ENCODE measurements at regions of chr7 and their contacts with region 1.

Region 1: DNA sequence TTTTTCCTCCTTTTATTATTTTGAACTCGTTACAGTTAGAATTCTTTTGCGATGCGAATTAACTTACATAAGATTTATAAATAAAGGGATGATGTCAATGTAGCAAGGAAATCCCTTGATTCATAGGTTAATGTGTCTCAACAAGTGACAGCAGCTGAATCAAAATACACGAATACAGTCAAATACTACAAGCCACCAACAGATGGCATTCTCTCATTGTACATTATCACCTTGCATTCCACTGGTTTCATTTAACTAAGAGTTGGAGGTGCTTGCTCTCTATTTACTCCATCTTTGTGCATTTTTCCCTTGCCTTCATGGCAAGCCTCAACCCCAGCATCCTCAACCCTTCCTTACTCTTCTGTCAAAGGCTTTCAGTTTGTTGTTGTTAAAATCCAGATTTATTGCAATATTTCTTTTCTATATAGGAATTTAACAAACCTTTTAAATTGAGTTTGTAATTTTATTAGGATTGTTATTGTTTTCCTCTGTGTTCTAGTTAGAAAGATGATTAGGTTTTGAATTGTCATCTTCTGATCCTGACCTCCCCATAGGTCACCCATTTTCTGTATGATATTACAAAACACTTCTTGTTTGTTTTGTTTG is 78.3 kb downstream of the SLC25A40 start:
- DNase-seq: no peak
- H3K4me3 Mint-ChIP-seq: no peak overlapping the region
- H3K27ac Mint-ChIP-seq: no peak overlapping the region
- H3K4me1 Mint-ChIP-seq: no peaks in the 10 kb centered on the region
- H3K27me3 Mint-ChIP-seq: peaks cover 9% of the 10 kb centered on the region

Region 2: DNA sequence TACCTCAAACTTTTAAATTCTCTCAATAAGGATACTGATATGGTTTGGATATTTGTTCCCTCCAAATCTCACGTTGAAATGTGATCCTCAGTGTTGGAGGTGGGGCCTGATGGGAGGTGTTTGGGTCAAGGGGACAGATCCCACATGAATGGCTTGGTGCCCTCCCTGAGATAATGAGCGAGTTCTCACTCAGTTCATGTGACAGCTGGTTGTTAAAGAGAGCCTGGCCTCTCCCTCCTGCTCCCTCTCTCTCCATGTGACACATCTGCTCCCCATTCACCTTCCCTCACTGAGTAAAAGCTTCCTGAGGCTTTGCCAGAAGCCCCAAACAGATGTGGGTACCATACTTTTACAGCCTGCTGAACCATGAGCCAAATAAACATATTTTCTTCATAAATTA is 341.7 kb before region 1 on chr7:
- CTCF ChIA-PET with region 1: no interaction called
- DNase-seq: no peak
- H3K4me3 Mint-ChIP-seq: no peak overlapping the region
- H3K27ac Mint-ChIP-seq: no peak overlapping the region
- H3K4me1 Mint-ChIP-seq: no peaks in the 10 kb centered on the region
- H3K27me3 Mint-ChIP-seq: peaks cover 5% of the 10 kb centered on the region

Region 3: DNA sequence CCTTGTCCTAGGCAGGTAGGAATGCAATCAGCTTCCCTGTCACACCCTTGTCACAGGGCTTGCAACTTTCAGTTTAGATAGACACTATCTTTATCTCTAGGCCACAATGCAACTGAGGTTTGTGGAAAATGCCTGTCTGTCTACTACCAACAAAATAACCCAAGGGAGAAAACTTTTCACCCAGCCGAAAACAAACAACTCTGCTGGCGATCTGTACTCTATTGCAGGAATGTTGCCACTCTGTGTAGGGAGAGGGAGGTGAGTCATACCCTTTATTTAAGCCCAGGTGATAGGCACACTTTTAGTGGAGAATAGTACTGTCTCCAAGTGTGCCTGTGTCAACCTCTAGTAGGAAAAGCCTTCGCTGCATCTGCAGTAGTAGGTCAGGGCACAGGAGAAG is 30.1 kb before region 1 on chr7:
- CTCF ChIA-PET with region 1: no interaction called
- DNase-seq: no peak
- H3K4me3 Mint-ChIP-seq: no peak overlapping the region
- H3K27ac Mint-ChIP-seq: no peak overlapping the region
- H3K4me1 Mint-ChIP-seq: no peaks in the 10 kb centered on the region
- H3K27me3 Mint-ChIP-seq: no peaks in the 10 kb centered on the region

Region 4: DNA sequence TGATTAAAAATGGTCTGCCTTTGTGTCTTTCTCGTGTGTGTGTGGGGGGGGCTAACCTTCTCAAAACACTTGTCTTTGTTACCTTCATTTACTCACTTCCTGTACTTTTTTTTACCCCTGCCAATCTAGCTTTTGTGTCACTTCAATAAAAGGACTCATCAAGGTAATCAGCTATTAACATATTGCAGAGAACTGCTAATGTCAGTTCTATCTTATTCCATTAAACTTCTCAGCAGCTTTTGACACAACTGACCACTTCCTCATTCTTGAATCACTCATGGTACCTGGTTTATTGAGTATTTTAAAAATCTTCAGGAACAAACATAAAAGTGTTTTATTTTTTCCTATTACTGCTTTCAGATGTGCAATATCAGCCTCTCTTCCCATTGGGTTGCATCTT is 18.5 kb after region 1 on chr7:
- CTCF ChIA-PET with region 1: no interaction called
- DNase-seq: no peak
- H3K4me3 Mint-ChIP-seq: no peak overlapping the region
- H3K27ac Mint-ChIP-seq: no peak overlapping the region
- H3K4me1 Mint-ChIP-seq: no peaks in the 10 kb centered on the region
- H3K27me3 Mint-ChIP-seq: peaks cover 4% of the 10 kb centered on the region

Region 5: DNA sequence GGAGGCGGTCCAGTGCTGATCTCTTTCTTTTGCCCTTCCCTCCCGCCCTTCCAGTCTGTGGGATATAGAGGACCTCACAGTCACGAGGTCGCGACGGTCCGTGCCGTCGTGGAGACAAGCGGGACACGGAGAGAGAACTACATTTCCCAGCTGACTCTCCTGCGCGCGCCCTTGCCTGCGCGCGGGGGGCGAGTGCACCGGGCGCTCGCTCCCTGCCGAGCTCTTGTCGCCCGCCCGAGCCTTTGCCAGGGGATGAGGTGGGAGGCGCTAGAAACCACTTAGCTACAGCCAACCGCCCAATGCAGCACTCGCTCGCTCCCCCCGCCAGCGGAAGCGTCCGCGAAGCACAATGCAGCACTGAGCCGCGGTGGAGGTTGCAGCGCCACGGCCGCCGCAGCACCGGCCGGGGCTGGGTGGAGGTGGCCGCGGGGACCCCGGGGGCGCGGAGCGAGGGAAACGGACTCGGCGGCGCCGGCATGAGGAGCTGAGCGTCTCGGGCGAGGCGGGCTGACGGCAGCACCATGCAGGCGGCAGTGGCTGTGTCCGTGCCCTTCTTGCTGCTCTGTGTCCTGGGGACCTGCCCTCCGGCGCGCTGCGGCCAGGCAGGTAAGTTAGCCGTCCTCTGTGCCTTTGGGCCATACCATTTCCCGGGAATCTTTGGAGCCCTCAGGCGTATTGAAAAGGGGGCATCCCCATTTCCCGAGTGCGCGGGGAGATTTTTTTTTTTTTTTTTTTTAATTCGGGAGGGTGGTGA is 136.2 kb after region 1 on chr7 and contains the start of gene ADAM22:
- CTCF ChIA-PET with region 1: no interaction called
- DNase-seq: peak; percentile 86
- H3K4me3 Mint-ChIP-seq: peak within 1 kb of the TSS; percentile 83
- H3K27ac Mint-ChIP-seq: no peak within 1 kb of the TSS
- H3K4me1 Mint-ChIP-seq: peaks cover 15% of the 10 kb centered on the region
- H3K27me3 Mint-ChIP-seq: peaks cover 48% of the 10 kb centered on the region

Region 6: GRCh38 chr7:88169717-88170320 is 371.9 kb after region 1 on chr7:
- CTCF ChIA-PET with region 1: interaction called, 10 read pairs
- DNase-seq: no peak
- H3K4me3 Mint-ChIP-seq: no peak overlapping the region
- H3K27ac Mint-ChIP-seq: no peak overlapping the region
- H3K4me1 Mint-ChIP-seq: no peaks in the 10 kb centered on the region
- H3K27me3 Mint-ChIP-seq: no peaks in the 10 kb centered on the region

Measured in activated naive CD4-positive, alpha-beta T cell treated with anti-CD3 and anti-CD28 coated beads, Interleukin-2, amount 10 ng/mL, durations not matched to agents 7 days and 5 days (primary cell).